Sciatic nerve (tissue), 2 donors: ENCODE measurements at regions of chr3 and their contacts with region 1.

Region 1: DNA sequence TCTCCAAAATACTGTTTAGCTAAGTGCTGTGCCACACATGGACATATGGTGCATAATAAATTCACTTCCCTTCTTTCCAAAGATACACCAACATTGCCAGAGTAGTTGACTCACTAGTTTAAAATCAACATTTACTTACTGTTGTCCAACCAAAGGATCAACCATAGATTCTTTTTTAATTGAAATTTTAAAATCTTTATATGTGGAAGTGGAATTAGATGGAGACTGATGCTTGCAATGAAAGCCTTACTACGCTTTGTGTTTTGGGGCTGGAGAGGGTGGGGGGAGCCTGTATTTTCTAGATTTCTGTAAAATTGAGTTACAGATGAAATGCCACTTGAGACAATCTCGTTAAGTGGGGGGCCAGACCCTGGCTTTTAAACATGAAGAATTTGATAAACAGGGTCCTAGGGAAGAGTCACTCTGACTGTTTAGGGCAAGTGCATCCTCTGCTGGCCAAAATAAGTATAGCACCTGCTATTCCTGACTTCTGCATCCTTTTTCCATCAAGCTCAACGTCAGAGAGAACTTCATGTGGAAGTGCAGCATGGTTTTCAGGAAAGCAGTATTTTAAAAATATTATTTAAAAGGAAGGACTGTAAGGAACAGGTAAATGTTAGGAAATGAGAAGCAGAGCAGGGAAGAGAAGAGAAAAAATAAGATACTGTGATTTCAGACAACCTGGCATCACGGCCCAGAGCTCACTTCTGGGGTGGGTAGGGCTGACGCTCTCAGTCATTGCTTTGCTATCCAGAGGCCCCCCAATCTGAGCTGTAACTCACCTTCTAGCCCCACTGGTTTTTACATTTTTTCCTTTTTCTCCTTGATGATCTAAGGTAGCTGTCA is 76.7 kb downstream of the BOC start:
- DNase-seq: no peak
- ATAC-seq: peak; percentile 64

Region 2: DNA sequence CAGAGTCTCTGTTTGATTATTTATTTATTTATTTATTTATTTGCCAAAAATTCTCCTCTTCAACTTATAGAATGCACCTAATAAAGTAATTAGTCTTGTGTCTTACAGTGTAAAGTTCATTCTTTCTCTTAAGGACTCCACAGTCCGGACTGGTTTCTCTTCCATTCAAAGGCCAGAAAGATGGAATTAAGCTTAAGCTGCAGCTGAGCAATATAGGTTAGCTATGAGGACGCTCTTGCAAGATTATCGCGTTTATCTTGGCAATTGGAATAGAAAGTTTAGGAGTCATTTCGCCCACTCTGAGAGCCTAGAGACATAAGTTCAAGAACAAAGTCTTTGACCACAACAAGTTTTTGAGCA is 1274.3 kb before region 1 on chr3:
- intact Hi-C with region 1: no loop called
- DNase-seq: no peak
- ATAC-seq: no peak

Region 3: GRCh38 chr3:113051302-113051711 is 236.7 kb before region 1 on chr3:
- intact Hi-C with region 1: loop called (anchors 5 kb)
- DNase-seq: peak; percentile 93
- ATAC-seq: peak; percentile 98

Region 4: GRCh38 chr3:113132571-113132996 is 155.4 kb before region 1 on chr3:
- intact Hi-C with region 1: loop called (anchors 5 kb)
- DNase-seq: no peak
- ATAC-seq: peak; percentile 28

Region 5: GRCh38 chr3:113606539-113607218 is 318.7 kb after region 1 on chr3:
- intact Hi-C with region 1: no loop called
- DNase-seq: no peak
- ATAC-seq: no peak